Right ventricle myocardium superior (tissue), 1 donor: ENCODE measurements at regions of chr22 and their contacts with region 1.

Region 1: GRCh38 chr22:45096256-45096907 is 67.3 kb upstream of the NUP50 start:
- DNase-seq: no peak
- ATAC-seq: peak; percentile 60

Region 2: DNA sequence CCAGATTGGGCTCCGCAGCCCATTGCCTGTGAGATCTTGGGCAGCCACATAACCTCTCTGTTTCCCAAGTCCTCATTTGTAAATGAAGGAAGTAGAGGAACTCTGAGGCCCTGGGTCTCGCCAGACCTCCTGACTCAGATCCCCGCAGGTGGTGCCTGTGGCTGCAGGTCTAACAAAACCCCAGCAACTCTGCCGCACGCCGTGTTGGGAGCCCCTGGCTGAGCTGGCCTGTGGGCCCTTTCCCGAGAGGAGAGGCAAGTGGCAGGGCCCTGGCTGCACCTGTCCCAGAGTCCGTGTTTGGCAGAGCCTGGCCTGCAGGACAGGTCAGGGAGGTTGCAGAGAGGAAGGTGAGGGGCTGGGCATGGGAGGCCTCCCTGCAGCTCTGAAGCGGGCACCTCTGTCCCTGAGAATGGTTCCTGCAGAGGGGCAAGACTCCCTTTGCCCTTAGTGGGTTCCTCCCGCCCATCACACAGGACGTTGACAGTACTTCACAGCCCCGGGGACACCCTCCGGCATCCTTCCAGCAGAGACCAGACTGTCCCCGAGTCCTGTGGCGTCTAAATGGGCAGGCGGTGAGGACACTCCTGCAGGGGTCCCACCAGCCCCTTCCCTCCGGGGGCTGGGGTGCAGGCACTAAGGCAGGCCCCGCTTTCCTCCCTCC is 276.3 kb before region 1 on chr22:
- intact Hi-C with region 1: loop called (anchors 5 kb)
- DNase-seq: peak; percentile 14
- ATAC-seq: no peak

Region 3: DNA sequence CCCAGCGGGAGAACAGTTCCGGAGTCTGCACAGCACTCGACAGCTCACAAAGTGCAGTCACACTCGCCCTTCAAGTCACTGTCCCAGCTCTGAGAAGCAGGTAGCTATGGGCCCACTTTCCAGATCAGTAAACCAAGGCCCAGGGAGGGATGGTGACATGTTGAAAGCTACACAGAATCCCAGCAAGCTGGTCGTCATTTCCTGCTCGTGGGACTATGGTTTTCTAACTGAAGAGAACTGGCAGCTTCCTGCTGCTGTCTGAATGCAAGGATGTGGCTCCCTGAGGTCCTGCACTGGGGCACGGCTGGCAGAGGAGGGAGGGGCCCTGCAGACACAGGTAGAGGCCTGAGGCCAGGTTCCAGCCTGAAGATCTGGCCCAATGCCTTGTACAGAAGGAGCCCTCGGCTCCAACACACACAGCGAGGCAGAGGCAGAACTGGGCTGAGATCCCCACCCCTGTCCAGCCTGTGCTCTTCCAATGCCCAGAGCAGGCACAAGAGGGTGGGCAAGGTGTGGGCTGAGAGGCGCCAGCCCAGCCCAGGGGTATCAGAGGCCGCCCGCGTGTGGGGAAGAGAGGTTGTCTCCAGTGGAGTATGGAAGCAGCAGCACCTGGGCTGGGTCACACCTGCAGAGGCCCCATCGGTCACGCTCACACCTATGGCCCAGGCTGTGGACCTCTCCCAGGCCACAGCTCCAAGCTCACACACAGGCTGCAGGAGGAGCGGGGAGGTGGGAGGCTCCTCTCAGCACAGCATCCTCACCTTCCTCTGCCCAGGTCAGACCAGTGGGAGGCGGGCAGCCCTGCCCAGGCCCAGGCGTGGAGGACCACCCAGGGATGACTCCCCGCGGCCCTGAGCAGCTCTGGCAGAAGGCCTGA is 205.7 kb before region 1 on chr22:
- intact Hi-C with region 1: loop called (anchors 5 kb)
- DNase-seq: no peak
- ATAC-seq: no peak

Region 4: GRCh38 chr22:44931077-44931540 is 165.3 kb before region 1 on chr22:
- intact Hi-C with region 1: no loop called
- DNase-seq: peak; percentile 88
- ATAC-seq: peak; percentile 91

Region 5: DNA sequence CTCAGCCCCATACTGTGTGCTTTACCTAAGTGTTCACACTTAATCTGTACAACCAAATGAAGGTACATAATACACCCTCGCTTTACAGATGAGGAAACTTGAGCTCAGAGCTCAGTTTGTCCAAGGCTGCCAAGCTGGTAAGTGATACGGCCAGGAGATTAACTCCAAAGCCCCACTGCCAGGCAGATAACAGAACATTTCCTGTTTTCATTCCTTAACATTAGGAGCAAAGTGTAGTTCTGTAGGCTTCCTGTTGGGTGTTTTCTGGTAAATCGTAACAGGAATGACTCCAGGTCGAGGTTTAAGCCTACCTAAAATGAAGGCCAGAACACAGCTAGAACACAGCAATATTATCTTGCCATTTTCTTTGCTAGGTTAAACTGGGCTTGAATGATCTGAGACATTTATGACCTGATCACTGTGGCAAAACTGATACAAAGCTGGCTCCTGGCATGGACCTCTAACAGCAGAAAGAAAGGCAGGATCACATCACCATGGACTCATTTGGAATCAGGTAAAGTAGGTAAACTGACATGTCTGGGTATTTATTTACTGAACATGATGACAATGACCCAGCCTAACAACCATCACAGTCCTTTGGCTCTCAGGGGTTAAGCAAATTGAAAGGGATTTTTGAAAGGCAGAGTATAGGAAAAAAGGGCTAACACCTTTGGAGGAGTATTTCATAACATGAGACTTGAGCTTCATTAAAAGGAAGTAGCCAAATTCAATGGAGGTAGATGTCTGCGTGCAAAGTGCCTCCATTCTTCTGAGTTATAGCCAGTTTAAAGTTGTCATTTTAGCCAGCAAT is 63.5 kb after region 1 on chr22:
- intact Hi-C with region 1: no loop called
- DNase-seq: no peak
- ATAC-seq: no peak